ENCODE measurements at regions of chr4 and their contacts with region 1.

Region 1: GRCh38 chr4:159175085-159175988 is 72.5 kb downstream of the RAPGEF2 start:
- DNase-seq: peak; percentile 40 to 85
- ATAC-seq: peak; percentile 90 to 97 (median 93)
- H3K4me3 ChIP-seq: no peak overlapping the region
- H3K4me3 Mint-ChIP-seq: no peak overlapping the region
- H3K27ac ChIP-seq: no peak overlapping the region
- H3K27ac Mint-ChIP-seq: peak overlapping the region in 1 of 2 donors; percentile 60
- H3K4me1 ChIP-seq: peaks cover 6% of the 10 kb centered on the region
- H3K4me1 Mint-ChIP-seq: peaks cover 9 to 21% of the 10 kb centered on the region in 2 donors
- H3K27me3 ChIP-seq: no peaks in the 10 kb centered on the region
- H3K27me3 Mint-ChIP-seq: peaks cover 7 to 9% of the 10 kb centered on the region in 2 donors
- CTCF ChIP-seq: peak; percentile 86

Region 2: DNA sequence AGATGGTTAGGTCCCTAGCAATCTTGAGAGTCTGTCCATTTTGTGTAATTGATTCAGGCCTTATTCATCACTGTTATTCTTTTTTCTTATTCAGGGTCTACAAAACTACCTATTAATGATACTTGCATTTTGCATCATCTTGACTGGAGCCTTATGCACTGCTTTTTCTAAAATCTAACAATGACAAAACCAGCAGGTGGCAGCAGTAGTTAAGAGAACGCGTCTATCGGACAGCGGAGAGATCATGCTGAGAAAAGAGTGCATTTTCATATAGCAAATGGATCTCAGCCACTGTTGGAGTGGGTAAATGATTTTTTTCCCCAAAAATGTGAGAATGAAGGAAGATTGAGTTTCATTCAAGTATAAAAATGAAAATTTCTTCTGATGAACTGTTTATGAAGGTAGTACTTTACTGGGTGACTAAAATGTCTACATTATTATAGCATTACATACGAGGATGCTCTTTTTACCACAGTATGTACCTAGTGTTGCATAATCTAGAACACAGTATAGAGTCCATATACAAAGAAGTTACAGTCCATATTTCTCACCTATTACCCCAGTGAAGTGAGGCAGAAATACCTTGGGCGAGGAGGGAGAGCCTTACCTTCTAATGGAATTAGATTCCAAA is 921.9 kb before region 1 on chr4:
- intact Hi-C with region 1: loop called (anchors 10 kb)
- DNase-seq: peak in 1 of 2 donors; percentile 60
- ATAC-seq: peak in 2 of 3 donors; percentile 49 to 54
- H3K4me3 ChIP-seq: no peak overlapping the region
- H3K4me3 Mint-ChIP-seq: no peak overlapping the region
- H3K27ac ChIP-seq: no peak overlapping the region
- H3K27ac Mint-ChIP-seq: no peak overlapping the region
- H3K4me1 ChIP-seq: no peaks in the 10 kb centered on the region
- H3K4me1 Mint-ChIP-seq: peaks cover 0 to 4% of the 10 kb centered on the region in 2 donors
- H3K27me3 ChIP-seq: no peaks in the 10 kb centered on the region
- H3K27me3 Mint-ChIP-seq: peaks cover 0 to 7% of the 10 kb centered on the region in 2 donors
- CTCF ChIP-seq: peak; percentile 23

Region 3: GRCh38 chr4:158729716-158730559 is 445.4 kb before region 1 on chr4:
- intact Hi-C with region 1: loop called (anchors 1 kb)
- DNase-seq: peak; percentile 40 to 77
- ATAC-seq: peak; percentile 84 to 92 (median 90)
- H3K4me3 ChIP-seq: no peak overlapping the region
- H3K4me3 Mint-ChIP-seq: no peak overlapping the region
- H3K27ac ChIP-seq: no peak overlapping the region
- H3K27ac Mint-ChIP-seq: no peak overlapping the region
- H3K4me1 ChIP-seq: no peaks in the 10 kb centered on the region
- H3K4me1 Mint-ChIP-seq: peaks cover 0 to 5% of the 10 kb centered on the region in 2 donors
- H3K27me3 ChIP-seq: peaks cover 15% of the 10 kb centered on the region
- H3K27me3 Mint-ChIP-seq: peaks cover 45% of the 10 kb centered on the region in 2 donors
- CTCF ChIP-seq: peak; percentile 81

Region 4: DNA sequence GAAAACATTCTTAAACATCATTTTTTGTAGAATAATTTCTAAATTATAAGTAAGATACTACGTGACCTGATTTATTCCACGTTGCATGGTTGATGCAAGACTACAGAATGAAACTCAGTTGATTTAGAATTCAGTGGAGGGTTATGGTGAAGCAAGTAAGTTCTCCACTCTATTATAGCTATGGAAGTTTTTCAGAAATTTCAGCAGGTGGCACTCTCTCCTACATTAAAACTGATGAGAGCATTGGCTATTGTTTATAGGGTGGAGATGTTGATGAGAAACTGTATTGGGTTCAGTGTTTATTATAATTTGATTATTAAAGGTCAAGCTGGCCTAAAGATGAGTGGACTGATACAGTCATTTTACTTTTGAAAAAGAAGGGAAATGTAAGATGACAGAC is 318.5 kb before region 1 on chr4:
- intact Hi-C with region 1: loop called (anchors 1 kb)
- DNase-seq: peak in 1 of 2 donors; percentile 58
- ATAC-seq: peak; percentile 68 to 92 (median 80)
- H3K4me3 ChIP-seq: no peak overlapping the region
- H3K4me3 Mint-ChIP-seq: no peak overlapping the region
- H3K27ac ChIP-seq: no peak overlapping the region
- H3K27ac Mint-ChIP-seq: peak overlapping the region in 1 of 2 donors; percentile 44
- H3K4me1 ChIP-seq: no peaks in the 10 kb centered on the region
- H3K4me1 Mint-ChIP-seq: no peaks in the 10 kb centered on the region
- H3K27me3 ChIP-seq: no peaks in the 10 kb centered on the region
- H3K27me3 Mint-ChIP-seq: no peaks in the 10 kb centered on the region
- CTCF ChIP-seq: peak; percentile 67

Measured in natural killer cell (primary cell).